ENCODE measurements at regions of chr16 and their contacts with region 1.

Region 1: GRCh38 chr16:50024684-50025536 is at the start of gene CNEP1R1:
- DNase-seq: peak; percentile 94 to 96 (median 95)
- ATAC-seq: peak; percentile 100
- H3K4me3 ChIP-seq: peak within 1 kb of the TSS; percentile 64 to 99 (median 90)
- H3K27ac ChIP-seq: peak within 1 kb of the TSS; percentile 51 to 94 (median 82)
- H3K4me1 ChIP-seq: peaks cover 0 to 23% (median 16%) of the 10 kb centered on the region in 12 donors
- H3K27me3 ChIP-seq: peaks cover 0 to 5% (median 0%) of the 10 kb centered on the region in 9 donors
- CTCF ChIP-seq: peak; percentile 99 to 100 (median 100)
- POLR2A ChIP-seq: peak in 1 of 2 donors; percentile 78
- total RNA-seq, gene CNEP1R1: 10.9 to 23.9 (median 17.9) TPM

Region 2: DNA sequence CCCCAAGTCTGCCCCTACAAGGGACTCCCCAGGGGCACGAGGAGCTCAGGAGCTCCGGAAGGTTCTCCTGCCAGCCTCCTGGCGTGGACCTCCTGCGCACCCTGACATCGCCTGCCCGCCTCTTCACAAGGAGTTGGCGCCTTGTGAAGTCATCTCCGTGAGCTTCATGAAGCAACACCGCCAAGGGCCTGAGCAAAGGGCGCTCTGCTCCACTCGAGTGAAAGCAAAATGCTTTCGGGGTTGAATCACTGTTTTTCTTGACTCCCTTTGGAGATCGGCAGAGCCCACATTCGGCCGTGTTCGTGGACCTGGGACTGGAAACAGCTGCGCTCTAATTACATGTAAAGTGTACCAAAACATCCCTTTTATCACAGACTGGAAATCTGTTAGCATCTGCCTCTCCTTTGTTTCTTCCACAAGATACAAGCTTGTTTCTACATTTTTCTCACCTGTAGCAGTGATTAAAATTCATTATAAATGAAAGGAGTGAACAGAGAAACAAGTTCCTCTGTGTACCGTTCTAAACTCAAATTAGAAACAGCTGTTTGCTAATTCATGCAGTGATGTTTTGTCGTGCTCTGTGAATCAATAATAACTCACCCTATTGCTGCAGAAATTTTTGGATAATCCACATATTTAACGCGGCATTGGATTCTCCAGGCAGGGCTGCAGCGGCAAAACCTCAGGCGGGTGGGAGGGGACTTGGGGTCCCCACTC is 372.3 kb before region 1 on chr16:
- intact Hi-C with region 1: loop called in 1 of 10 experiments (anchors 5 kb)
- DNase-seq: peak; percentile 30 to 81 (median 74)
- ATAC-seq: peak; percentile 53 to 86 (median 73)
- H3K4me3 ChIP-seq: peak overlapping the region in 2 of 12 donors; percentile 19 to 28
- H3K27ac ChIP-seq: peak overlapping the region in 11 of 12 donors; percentile 3 to 75 (median 52)
- H3K4me1 ChIP-seq: peaks cover 0 to 7% (median 0%) of the 10 kb centered on the region in 12 donors
- H3K27me3 ChIP-seq: no peaks in the 10 kb centered on the region
- CTCF ChIP-seq: no peak
- POLR2A ChIP-seq: no peak

Region 3: DNA sequence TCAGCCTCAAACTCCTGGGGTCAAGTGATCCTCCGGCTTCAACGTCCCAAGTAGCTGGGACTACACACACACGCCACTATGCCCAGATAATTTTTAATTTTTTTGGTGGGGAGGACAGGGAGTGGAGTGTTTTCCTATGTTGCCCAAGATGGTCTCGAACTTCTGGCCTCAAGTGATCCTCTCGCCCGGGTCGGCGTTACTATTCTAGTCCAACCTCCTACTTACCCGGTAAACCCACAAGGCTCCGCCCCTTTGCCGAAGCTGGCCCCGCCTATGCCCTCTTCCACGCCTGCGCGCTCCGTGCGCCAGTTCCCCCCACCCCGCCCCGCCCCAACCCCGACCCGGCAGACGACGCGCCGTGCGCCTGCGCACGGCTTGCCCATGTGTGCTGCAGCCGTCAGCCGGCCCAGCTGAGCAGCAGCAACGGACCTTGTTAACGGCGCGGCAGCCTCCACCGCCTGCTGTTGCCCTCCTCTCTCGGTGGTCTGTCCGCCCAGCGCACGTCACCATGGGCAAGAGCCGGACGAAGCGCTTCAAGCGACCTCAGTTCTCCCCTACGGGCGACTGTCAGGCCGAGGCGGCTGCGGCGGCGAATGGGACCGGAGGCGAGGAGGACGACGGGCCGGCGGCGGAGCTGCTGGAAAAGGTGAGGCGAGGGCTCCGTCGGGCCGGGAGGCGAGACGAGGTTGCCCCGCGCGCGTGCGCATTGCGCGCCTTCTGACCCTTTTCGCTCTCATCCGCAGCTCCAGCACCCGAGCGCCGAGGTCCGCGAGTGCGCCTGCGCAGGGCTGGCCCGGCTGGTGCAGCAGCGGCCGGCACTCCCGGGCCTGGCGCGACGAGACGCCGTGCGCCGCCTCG is 40.9 kb after region 1 on chr16 and contains the start of gene HEATR3:
- intact Hi-C with region 1: loop called in 3 of 10 experiments (anchors 2 to 5 kb)
- DNase-seq: peak; percentile 91 to 97 (median 94)
- ATAC-seq: peak; percentile 95 to 98 (median 96)
- H3K4me3 ChIP-seq: peak within 1 kb of the TSS; percentile 70 to 100 (median 91)
- H3K27ac ChIP-seq: peak within 1 kb of the TSS; percentile 81 to 100 (median 98)
- H3K4me1 ChIP-seq: peaks cover 0 to 32% (median 22%) of the 10 kb centered on the region in 12 donors
- H3K27me3 ChIP-seq: no peaks in the 10 kb centered on the region
- CTCF ChIP-seq: peak in 1 of 12 donors; percentile 22
- POLR2A ChIP-seq: peak in 1 of 2 donors; percentile 49
- total RNA-seq, gene HEATR3: 9.5 to 21.2 (median 11.9) TPM

Region 4: GRCh38 chr16:50152807-50153452 is 128.0 kb after region 1 on chr16 and contains the start of gene TENT4B:
- intact Hi-C with region 1: loop called in 1 of 10 experiments (anchors 5 kb)
- DNase-seq: peak; percentile 90 to 94 (median 91)
- ATAC-seq: peak; percentile 80 to 95 (median 94)
- H3K4me3 ChIP-seq: peak within 1 kb of the TSS; percentile 67 to 98 (median 86)
- H3K27ac ChIP-seq: peak within 1 kb of the TSS; percentile 89 to 99 (median 96)
- H3K4me1 ChIP-seq: peaks cover 0 to 39% (median 20%) of the 10 kb centered on the region in 12 donors
- H3K27me3 ChIP-seq: no peaks in the 10 kb centered on the region
- CTCF ChIP-seq: no peak
- POLR2A ChIP-seq: peak in 1 of 2 donors; percentile 74
- total RNA-seq, gene TENT4B: 4.8 to 8.8 (median 7.0) TPM

Region 5: DNA sequence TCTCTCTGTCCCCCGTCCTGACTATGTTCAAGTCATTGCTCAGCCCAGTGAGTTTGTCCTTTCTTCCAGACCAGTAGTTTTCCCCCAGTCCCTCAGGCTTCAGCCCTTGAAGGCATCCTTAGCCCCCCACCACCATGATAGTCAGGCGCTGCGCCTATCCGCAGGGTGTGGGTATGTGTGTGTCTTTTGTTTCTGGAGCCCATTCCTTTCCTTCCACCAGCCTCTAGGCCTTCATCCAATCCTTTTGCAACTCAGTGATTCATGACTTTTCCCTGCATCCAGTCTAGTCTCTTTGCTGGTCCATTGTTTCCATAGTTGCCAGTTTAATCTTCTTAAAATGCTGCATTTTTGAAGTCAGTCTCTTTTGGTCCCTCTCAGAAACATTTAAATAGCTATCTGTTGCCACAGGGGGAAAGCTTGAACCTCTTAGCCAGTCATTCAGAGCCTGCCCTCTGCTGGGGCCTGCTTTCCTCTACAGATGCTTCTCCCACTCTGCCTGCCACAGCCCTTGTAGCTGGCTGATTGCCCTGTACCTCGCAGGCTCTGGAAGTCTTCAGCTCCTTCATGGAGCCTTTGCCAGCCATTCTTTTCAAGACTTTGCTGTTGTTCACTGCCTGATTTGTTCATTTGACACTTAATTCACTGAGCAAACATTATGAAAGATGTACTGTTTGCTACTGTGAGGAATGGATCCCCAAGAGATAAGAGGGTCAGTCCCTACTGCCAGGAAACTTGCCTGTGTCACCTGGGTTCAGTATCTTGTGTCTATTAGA is 185.5 kb after region 1 on chr16:
- intact Hi-C with region 1: loop called (anchors 1 to 5 kb)
- DNase-seq: peak; percentile 81 to 89 (median 82)
- ATAC-seq: peak; percentile 92 to 95 (median 94)
- H3K4me3 ChIP-seq: no peak overlapping the region
- H3K27ac ChIP-seq: peak overlapping the region in 3 of 12 donors; percentile 17 to 48 (median 40)
- H3K4me1 ChIP-seq: peaks cover 2 to 54% (median 37%) of the 10 kb centered on the region in 12 donors
- H3K27me3 ChIP-seq: no peaks in the 10 kb centered on the region
- CTCF ChIP-seq: peak; percentile 52 to 88 (median 71)
- POLR2A ChIP-seq: no peak

Region 6: DNA sequence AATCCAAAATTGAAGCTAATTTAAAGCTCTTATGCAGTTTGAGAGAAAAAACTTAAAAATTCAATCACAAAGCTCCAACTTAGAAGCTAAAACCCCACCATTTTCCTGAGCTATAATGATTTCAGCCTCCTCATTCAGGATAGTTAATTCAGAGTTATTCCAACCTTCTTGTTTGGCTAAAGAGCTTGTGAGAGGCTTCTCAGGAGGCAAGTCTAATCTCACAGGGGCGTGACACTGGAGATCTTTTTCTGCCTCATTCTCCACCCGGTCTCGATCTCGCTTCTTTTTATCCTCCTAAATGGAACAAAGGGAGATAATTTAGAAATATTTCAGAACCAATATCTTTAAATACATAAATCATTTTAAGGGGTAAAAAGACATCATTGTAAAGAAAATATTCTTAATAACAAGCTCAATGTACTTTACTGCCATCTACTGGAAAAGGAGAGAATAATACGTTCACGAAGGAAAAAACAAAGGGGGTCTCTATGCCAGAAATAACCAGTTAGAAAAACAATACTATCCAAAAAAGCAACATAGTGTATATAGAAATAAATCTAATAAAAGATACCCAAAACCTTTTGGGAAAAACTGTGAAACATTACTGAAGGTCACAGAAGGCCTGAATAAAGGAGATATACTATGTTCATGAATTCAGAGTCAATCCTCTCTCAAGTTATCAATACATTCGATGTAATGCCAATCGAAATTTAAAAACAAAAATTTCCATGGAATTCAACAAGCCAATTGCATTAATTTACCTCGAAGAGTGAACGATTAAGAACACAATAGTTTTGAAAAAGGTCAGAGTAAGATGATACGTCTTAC is 329.9 kb after region 1 on chr16:
- intact Hi-C with region 1: loop called in 8 of 10 experiments (anchors 5 to 10 kb)
- DNase-seq: no peak
- ATAC-seq: no peak
- H3K4me3 ChIP-seq: no peak overlapping the region
- H3K27ac ChIP-seq: peak overlapping the region in 2 of 12 donors; percentile 7 to 16
- H3K4me1 ChIP-seq: peaks cover 0 to 6% (median 0%) of the 10 kb centered on the region in 12 donors
- H3K27me3 ChIP-seq: no peaks in the 10 kb centered on the region
- CTCF ChIP-seq: peak; percentile 38 to 73 (median 61)
- POLR2A ChIP-seq: no peak

Region 7: GRCh38 chr16:50368410-50369132 is 343.7 kb after region 1 on chr16 and contains the start of gene BRD7:
- intact Hi-C with region 1: loop called in 4 of 10 experiments (anchors 5 to 10 kb)
- DNase-seq: peak; percentile 54 to 85 (median 70)
- ATAC-seq: peak; percentile 34 to 85 (median 68)
- H3K4me3 ChIP-seq: peak within 1 kb of the TSS; percentile 78 to 99 (median 96)
- H3K27ac ChIP-seq: peak within 1 kb of the TSS in 11 of 12 donors; percentile 39 to 82 (median 65)
- H3K4me1 ChIP-seq: peaks cover 7 to 48% (median 22%) of the 10 kb centered on the region in 12 donors
- H3K27me3 ChIP-seq: no peaks in the 10 kb centered on the region
- CTCF ChIP-seq: peak in 10 of 12 donors; percentile 33 to 76 (median 60)
- POLR2A ChIP-seq: no peak
- total RNA-seq, gene BRD7: 29.8 to 49.7 (median 45.3) TPM